HepG2 (cell line): ENCODE measurements at regions of chr16 and their contacts with region 1.

Region 1: DNA sequence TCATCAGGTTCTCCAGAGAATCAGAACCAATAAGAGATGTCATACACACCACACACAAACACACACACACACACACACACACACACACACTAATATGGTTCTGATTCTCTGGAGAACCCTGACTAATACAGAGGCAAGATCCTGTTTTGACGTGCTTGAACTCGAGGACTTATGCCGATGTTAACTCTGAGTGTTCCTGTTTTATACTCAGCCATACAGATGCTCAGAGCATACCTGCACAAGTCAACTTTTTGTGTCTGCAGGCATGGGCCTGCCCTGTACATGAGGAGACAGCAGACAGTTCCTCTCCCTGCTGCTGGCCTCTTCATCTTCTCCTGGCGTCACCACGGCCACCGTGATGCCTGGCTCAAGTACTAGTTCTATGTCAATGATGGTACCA is 635.9 kb downstream of the WWOX start:
- DNase-seq: no peak
- ATAC-seq: no peak
- H3K4me3 ChIP-seq: no peak overlapping the region
- H3K27ac ChIP-seq: peak overlapping the region; percentile 76
- H3K4me1 ChIP-seq: peaks cover 98% of the 10 kb centered on the region
- H3K27me3 ChIP-seq: no peaks in the 10 kb centered on the region
- CTCF ChIP-seq: no peak
- EP300 ChIP-seq: no peak
- POLR2A ChIP-seq: no peak
- RAD21 ChIP-seq: no peak

Region 2: GRCh38 chr16:78755751-78756661 is 20.7 kb after region 1 on chr16:
- CTCF ChIA-PET with region 1: no interaction called
- POLR2A ChIA-PET with region 1: interaction called, 12 read pairs
- in situ Hi-C with region 1: no loop called
- intact Hi-C with region 1: loop called (anchors 2 kb)
- DNase-seq: peak; percentile 69
- ATAC-seq: peak; percentile 93
- H3K4me3 ChIP-seq: peak overlapping the region in 1 of 3 experiments; percentile 3; a peak in 1 of 6 replicates
- H3K27ac ChIP-seq: peak overlapping the region; percentile 47
- H3K4me1 ChIP-seq: peaks cover 24% of the 10 kb centered on the region
- H3K27me3 ChIP-seq: no peaks in the 10 kb centered on the region
- CTCF ChIP-seq: no peak
- EP300 ChIP-seq: peak in 1 of 2 experiments; percentile 80; a peak in 2 of 4 replicates
- POLR2A ChIP-seq: no peak
- RAD21 ChIP-seq: no peak

Region 3: DNA sequence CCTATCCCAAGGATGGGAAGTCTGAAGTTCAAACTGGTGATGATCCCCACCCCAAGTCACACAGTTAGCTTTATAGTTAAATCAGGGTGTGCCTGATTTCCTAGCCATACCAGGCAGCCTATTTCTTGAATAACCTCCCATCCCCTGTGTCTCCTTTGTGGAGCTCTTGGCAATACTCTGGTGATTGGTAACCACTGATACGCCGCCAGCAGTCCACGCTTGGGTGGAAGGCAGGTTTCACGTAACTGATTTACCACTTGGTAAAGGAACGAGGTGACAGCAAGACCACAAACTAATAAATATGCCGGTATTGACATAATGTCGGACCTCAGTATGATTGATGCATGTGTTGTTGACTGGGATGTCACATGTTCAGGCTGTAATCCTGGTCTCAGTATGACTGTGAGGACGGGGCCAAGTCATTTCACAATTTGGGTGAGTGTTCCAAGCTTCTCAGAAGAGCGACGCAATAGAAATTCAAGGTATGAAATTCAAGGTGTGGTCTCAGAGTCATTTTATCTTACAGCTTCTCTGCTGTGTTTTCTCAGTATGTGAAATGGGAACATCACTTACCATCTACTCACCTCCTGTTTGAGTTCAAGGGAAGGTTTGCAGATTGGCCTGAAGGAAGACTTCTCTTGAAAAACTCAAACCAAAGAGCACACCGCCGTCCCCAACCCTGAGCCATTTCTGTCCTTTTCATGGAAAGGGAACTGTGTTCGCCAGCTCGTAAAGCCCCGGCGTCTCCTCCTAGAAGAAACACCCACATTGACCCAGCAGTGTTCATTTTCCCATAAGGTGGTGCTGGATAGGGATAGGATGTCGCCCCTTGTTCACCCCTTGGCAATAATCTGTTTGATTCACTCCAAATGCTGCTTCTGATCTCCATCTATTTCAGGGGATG is 43.0 kb after region 1 on chr16:
- CTCF ChIA-PET with region 1: no interaction called
- POLR2A ChIA-PET with region 1: no interaction called
- in situ Hi-C with region 1: no loop called
- intact Hi-C with region 1: no loop called
- DNase-seq: no peak
- ATAC-seq: no peak
- H3K4me3 ChIP-seq: no peak overlapping the region
- H3K27ac ChIP-seq: no peak overlapping the region
- H3K4me1 ChIP-seq: no peaks in the 10 kb centered on the region
- H3K27me3 ChIP-seq: no peaks in the 10 kb centered on the region
- CTCF ChIP-seq: no peak
- EP300 ChIP-seq: no peak
- POLR2A ChIP-seq: no peak
- RAD21 ChIP-seq: no peak

Region 4: DNA sequence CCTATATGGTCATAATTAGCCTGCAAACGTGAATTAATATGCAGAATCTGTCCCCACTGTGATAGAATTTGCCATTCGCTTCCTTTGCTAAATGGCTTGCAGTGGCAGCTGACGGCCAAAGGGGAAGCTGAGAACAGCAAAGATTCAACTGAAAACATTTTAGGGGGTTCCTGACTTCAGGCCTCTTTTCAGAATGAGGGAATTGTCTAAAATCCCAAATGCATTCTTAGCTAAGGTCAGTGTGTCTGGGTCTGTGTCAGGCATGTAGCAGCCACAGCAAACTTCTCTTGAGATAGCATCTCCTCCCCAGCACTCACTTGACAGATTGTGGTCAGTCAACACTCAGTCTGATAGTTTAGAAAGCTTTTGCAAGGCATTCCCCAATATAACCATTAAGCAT is 65.2 kb after region 1 on chr16:
- CTCF ChIA-PET with region 1: no interaction called
- POLR2A ChIA-PET with region 1: no interaction called
- in situ Hi-C with region 1: no loop called
- intact Hi-C with region 1: no loop called
- DNase-seq: no peak
- ATAC-seq: no peak
- H3K4me3 ChIP-seq: no peak overlapping the region
- H3K27ac ChIP-seq: no peak overlapping the region
- H3K4me1 ChIP-seq: peaks cover 32% of the 10 kb centered on the region
- H3K27me3 ChIP-seq: no peaks in the 10 kb centered on the region
- CTCF ChIP-seq: no peak
- EP300 ChIP-seq: no peak
- POLR2A ChIP-seq: no peak
- RAD21 ChIP-seq: no peak